Activated T-helper 1 cell treated with anti-CD3 and anti-CD28 coated beads, Interleukin-12 subunit alpha, Interleukin-12 subunit beta, Interleukin-2, Interleukin-4 antibody, amounts not matched to agents 30 ng/mL and 10 ng/mL and 1 ng/mL, durations not matched to agents 14 hours and 24 hours and 36 hours (primary cell): ENCODE measurements at regions of chr6 and their contacts with region 1.

Region 1: GRCh38 chr6:157068691-157069324 is 254.5 kb downstream of the TMEM242 start:
- DNase-seq: no peak
- H3K4me3 Mint-ChIP-seq: peak overlapping the region; percentile 41
- H3K27ac Mint-ChIP-seq: peak overlapping the region; percentile 87
- H3K4me1 Mint-ChIP-seq: peaks cover 62% of the 10 kb centered on the region
- H3K27me3 Mint-ChIP-seq: no peaks in the 10 kb centered on the region

Region 2: GRCh38 chr6:157034436-157035230 is 34.2 kb before region 1 on chr6:
- intact Hi-C with region 1: loop called (anchors 2 kb)
- DNase-seq: no peak
- H3K4me3 Mint-ChIP-seq: peak overlapping the region; percentile 65
- H3K27ac Mint-ChIP-seq: peak overlapping the region; percentile 40
- H3K4me1 Mint-ChIP-seq: peaks cover 25% of the 10 kb centered on the region
- H3K27me3 Mint-ChIP-seq: no peaks in the 10 kb centered on the region

Region 3: DNA sequence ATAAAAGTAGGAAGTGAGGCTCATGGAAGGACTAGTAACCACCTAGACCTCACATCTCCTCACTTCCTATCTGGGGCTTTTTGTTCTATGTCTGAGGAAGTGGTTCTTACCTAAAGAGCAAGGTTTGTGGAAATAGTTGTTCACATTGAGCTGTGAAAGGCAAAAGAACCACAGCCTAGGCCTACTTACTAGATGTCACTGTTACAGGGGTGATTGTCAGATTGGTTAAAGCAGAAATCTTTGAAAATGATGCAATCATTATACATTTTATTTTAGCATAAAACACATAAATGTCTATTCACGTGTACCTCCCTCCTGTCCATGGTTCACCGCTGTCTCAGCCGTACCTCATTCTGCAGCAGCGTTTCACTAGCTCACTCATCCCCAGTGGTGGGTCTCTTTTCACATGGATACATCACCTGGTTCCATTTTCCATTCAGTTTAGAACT is 14.3 kb before region 1 on chr6:
- intact Hi-C with region 1: loop called (anchors 1 kb)
- DNase-seq: peak; percentile 35
- H3K4me3 Mint-ChIP-seq: peak overlapping the region; percentile 53
- H3K27ac Mint-ChIP-seq: peak overlapping the region; percentile 95
- H3K4me1 Mint-ChIP-seq: peaks cover 33% of the 10 kb centered on the region
- H3K27me3 Mint-ChIP-seq: no peaks in the 10 kb centered on the region

Region 4: GRCh38 chr6:157099912-157100593 is 31.2 kb after region 1 on chr6:
- intact Hi-C with region 1: loop called (anchors 1 kb)
- DNase-seq: peak; percentile 58
- H3K4me3 Mint-ChIP-seq: peak overlapping the region; percentile 63
- H3K27ac Mint-ChIP-seq: peak overlapping the region; percentile 86
- H3K4me1 Mint-ChIP-seq: peaks cover 57% of the 10 kb centered on the region
- H3K27me3 Mint-ChIP-seq: no peaks in the 10 kb centered on the region

Region 5: GRCh38 chr6:157151989-157152388 is 83.2 kb after region 1 on chr6:
- intact Hi-C with region 1: loop called (anchors 5 kb)
- DNase-seq: no peak
- H3K4me3 Mint-ChIP-seq: no peak overlapping the region
- H3K27ac Mint-ChIP-seq: no peak overlapping the region
- H3K4me1 Mint-ChIP-seq: peaks cover 25% of the 10 kb centered on the region
- H3K27me3 Mint-ChIP-seq: no peaks in the 10 kb centered on the region